ENCODE measurements at regions of chr14 and their contacts with region 1.

Region 1: DNA sequence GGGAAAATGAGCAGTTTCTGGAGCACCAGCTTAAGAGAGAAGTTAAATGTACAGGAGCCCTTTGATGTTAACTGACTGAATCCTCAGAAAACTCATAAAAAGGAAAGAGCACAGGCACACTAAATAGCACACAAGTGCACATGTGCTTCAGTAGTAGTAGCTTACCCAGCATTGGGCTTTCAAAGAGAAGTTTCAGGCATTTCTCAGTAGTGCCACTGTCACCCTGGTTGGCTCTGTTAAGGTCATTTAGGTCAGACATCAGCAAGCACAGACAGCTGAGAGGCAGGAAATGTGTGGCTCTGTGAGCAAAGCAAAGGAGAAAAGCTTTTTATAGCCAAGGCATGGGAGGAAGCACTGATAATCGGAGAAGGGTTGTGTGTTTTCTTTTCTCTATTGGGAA is 96.3 kb upstream of the HIF1A start:
- DNase-seq: peak; percentile 54
- H3K4me3 Mint-ChIP-seq: no peak overlapping the region
- H3K27ac Mint-ChIP-seq: peak overlapping the region; percentile 65
- H3K4me1 Mint-ChIP-seq: peaks cover 48% of the 10 kb centered on the region
- H3K27me3 Mint-ChIP-seq: no peaks in the 10 kb centered on the region

Region 2: DNA sequence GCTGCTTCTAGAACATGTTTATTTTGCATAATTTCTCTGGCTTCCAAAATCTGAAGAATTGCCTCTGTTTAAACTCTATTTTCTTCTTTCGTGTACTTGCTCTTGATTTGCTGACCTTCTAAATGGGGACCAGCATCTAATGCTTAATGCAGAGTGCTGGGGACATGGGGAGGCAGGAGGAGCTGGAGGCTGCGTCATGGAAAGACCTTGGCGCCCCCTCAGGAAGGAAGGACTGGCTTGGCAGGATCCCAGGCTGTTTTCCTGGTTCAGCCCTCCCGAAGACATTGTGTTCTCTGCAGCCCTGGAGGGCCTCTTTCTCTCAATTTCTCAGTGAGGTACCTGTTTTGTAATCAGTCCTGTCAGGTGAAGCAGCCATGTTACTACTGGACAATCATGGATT is 272.1 kb before region 1 on chr14:
- CTCF ChIA-PET with region 1: interaction called, 3 read pairs
- POLR2A ChIA-PET with region 1: no interaction called
- intact Hi-C with region 1: loop called (anchors 2 kb)
- DNase-seq: no peak
- H3K4me3 Mint-ChIP-seq: peak overlapping the region; percentile 99
- H3K27ac Mint-ChIP-seq: peak overlapping the region; percentile 93
- H3K4me1 Mint-ChIP-seq: peaks cover 64% of the 10 kb centered on the region
- H3K27me3 Mint-ChIP-seq: no peaks in the 10 kb centered on the region

Region 3: DNA sequence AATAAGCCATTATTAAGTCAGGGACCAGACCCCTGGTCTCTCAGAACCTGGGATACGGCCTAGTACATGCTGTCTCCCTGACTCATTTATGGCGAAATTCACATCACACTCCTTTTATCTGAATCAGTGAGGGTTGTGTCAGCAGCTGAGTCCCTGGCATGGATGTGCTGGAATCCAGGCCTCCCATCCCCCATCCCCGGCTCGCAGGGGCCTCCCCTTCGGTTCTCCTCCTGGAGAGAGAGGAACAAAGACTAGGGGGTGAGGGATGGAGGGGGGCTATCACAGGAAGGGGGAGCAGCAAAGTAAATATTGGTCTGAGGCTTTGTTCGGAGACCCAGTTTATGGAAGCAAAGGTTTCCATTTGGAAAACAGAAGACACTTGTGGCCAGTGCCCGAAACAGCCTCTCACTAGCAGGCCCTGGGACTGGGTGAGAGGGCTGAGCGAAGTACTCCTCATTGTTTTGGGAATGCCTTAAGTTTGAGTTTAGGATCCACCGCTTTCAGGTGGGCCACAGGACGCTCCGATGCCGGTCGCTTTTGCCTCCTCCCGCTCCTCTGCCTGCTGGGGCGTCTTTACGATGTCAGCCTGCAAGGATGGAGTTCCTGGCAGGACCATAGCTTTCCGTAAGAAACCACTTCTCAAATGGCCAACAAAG is 132.6 kb before region 1 on chr14:
- CTCF ChIA-PET with region 1: no interaction called
- POLR2A ChIA-PET with region 1: no interaction called
- intact Hi-C with region 1: no loop called
- DNase-seq: no peak
- H3K4me3 Mint-ChIP-seq: no peak overlapping the region
- H3K27ac Mint-ChIP-seq: peak overlapping the region; percentile 20
- H3K4me1 Mint-ChIP-seq: peaks cover 73% of the 10 kb centered on the region
- H3K27me3 Mint-ChIP-seq: no peaks in the 10 kb centered on the region

Region 4: GRCh38 chr14:61512026-61512834 is 86.8 kb before region 1 on chr14:
- CTCF ChIA-PET with region 1: no interaction called
- POLR2A ChIA-PET with region 1: no interaction called
- intact Hi-C with region 1: loop called (anchors 2 kb)
- DNase-seq: no peak
- H3K4me3 Mint-ChIP-seq: peak overlapping the region; percentile 51
- H3K27ac Mint-ChIP-seq: peak overlapping the region; percentile 98
- H3K4me1 Mint-ChIP-seq: peaks cover 95% of the 10 kb centered on the region
- H3K27me3 Mint-ChIP-seq: no peaks in the 10 kb centered on the region

Region 5: GRCh38 chr14:61561657-61562276 is 37.2 kb before region 1 on chr14:
- CTCF ChIA-PET with region 1: no interaction called
- POLR2A ChIA-PET with region 1: interaction called, 3 read pairs
- intact Hi-C with region 1: loop called (anchors 1 kb)
- DNase-seq: no peak
- H3K4me3 Mint-ChIP-seq: no peak overlapping the region
- H3K27ac Mint-ChIP-seq: peak overlapping the region; percentile 83
- H3K4me1 Mint-ChIP-seq: peaks cover 66% of the 10 kb centered on the region
- H3K27me3 Mint-ChIP-seq: no peaks in the 10 kb centered on the region

Region 6: DNA sequence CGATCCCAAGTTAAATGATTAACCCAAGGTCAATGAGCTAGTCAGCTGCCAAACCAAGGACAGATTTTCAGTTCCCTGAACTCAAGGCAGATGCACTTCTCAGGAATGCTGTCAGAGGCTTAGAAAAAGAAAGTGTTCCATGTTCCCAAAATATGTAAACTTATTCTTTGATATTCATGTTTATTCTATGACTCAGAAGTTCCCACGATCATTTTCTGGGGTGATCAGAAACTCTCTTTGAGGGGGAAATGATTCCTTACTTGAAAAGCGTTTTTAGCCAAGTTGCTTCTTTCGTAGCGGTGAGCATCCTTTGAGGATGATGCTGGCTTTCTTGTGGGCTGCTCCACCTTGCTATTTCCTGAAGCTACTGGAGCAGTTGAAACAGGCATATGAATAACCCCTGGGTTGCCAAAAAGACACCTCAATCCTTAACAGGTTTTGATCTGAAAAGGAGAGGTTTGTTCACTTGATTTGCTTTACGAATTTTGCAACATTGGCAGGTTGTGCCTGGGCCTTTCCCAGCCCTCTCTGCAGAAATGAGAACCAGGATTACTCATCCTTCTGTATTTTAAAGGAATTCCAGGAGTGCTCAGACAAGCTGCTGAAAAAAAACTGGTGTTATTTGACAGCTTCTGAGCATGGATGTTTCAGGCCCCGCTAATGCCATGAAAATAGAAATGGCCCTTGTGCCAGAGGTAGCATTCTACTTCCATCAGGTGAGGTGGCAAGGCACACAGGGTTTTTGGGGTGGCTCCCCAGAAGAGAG is 25.0 kb before region 1 on chr14:
- CTCF ChIA-PET with region 1: interaction called, 4 read pairs
- POLR2A ChIA-PET with region 1: interaction called, 3 read pairs
- intact Hi-C with region 1: loop called (anchors 1 kb)
- DNase-seq: peak; percentile 52
- H3K4me3 Mint-ChIP-seq: peak overlapping the region; percentile 7
- H3K27ac Mint-ChIP-seq: peak overlapping the region; percentile 49
- H3K4me1 Mint-ChIP-seq: peaks cover 58% of the 10 kb centered on the region
- H3K27me3 Mint-ChIP-seq: no peaks in the 10 kb centered on the region

Region 7: DNA sequence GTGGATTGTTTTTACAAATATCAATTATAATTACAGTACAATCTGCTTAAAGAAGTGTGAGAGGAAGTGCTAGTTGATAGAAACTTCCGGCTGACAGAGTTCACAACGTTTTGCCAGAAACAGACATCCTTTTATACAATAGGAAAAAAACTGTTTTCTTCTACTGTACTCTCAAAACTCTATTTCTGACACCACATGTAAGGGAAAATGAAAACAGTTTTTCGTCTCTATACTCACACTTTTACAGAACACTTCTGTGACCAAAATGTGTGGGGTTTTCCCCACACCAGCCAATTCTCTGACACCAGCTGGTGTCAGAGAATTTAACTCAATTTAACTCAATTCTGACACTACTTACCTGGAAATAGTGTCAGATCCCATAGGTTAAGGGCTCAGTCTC is 72.1 kb after region 1 on chr14:
- CTCF ChIA-PET with region 1: interaction called, 3 read pairs
- POLR2A ChIA-PET with region 1: no interaction called
- intact Hi-C with region 1: loop called (anchors 1 kb)
- DNase-seq: peak; percentile 65
- H3K4me3 Mint-ChIP-seq: no peak overlapping the region
- H3K27ac Mint-ChIP-seq: no peak overlapping the region
- H3K4me1 Mint-ChIP-seq: peaks cover 15% of the 10 kb centered on the region
- H3K27me3 Mint-ChIP-seq: no peaks in the 10 kb centered on the region